ENCODE measurements at regions of chr20 and their contacts with region 1.

Region 1: DNA sequence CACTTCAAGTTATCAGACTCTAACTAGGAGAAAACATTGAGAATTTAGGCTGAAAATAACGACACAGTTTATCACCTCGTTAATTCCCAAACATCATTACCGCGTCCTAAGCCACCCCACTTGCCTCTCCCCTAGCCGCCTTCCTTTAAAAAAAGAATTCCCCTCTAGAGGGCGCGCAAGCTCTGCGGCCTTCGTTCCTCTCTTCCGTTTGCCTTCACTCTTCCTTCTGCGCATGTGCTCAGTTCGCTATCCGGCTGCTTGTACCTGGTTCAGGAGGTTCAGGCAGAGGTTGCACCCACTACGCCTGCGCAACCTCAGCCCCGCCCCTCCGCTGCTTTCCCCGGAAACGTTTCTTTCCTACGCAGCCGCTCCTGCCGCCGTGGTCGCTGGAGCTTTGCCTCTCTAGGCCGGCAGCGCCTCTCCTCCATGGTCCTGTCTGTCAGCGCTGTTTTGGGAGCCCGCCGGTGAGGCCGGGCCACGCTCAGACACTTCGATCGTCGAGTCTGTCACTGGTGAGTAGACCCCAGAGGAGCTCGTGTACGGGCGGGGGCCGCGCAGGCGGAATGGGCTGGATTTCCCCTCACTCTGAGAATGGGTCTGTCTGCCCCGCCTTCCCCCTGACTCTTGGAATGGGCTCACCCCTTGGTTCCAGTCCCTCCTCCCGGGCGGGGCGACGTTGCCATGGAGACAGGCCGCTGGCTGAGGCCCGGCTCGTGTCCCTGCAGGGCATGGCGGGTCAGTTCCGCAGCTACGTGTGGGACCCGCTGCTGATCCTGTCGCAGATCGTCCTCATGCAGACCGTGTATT is at the start of gene SYS1:
- DNase-seq: peak; percentile 94
- ATAC-seq: peak; percentile 84
- H3K4me3 Mint-ChIP-seq: peak within 1 kb of the TSS; percentile 100
- H3K27ac Mint-ChIP-seq: peak within 1 kb of the TSS; percentile 99
- H3K4me1 Mint-ChIP-seq: peaks cover 53% of the 10 kb centered on the region
- H3K27me3 Mint-ChIP-seq: no peaks in the 10 kb centered on the region
- CTCF ChIP-seq: peak; percentile 69
- total RNA-seq, gene SYS1: 31.7 and 35.2 TPM in 2 replicates

Region 2: DNA sequence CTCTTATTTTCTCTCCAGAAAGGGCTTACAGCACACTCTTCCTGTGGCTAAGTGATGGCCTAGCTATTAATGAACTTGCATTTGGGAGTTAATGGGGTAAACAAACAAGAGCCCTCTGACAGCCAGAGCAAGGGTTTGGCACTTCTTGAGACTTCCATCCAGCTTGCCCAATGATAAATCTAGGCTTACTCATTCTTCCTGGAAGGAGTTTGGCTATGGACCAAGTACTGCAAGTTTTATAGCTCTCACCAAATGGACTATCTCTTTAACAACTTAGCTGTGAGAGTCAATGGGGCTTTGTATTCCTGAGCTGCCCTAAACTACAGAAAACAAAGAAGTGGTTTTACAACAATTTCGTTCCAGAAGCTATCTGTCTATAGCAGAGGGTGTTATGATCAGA is 205.0 kb before region 1 on chr20:
- CTCF ChIA-PET with region 1: no interaction called
- POLR2A ChIA-PET with region 1: no interaction called
- intact Hi-C with region 1: no loop called
- DNase-seq: no peak
- ATAC-seq: no peak
- H3K4me3 Mint-ChIP-seq: no peak overlapping the region
- H3K27ac Mint-ChIP-seq: no peak overlapping the region
- H3K4me1 Mint-ChIP-seq: peaks cover 15% of the 10 kb centered on the region
- H3K27me3 Mint-ChIP-seq: peaks cover 24% of the 10 kb centered on the region
- CTCF ChIP-seq: no peak

Region 3: GRCh38 chr20:45229264-45230056 is 133.5 kb before region 1 on chr20:
- CTCF ChIA-PET with region 1: no interaction called
- POLR2A ChIA-PET with region 1: no interaction called
- intact Hi-C with region 1: no loop called
- DNase-seq: no peak
- ATAC-seq: no peak
- H3K4me3 Mint-ChIP-seq: no peak overlapping the region
- H3K27ac Mint-ChIP-seq: no peak overlapping the region
- H3K4me1 Mint-ChIP-seq: no peaks in the 10 kb centered on the region
- H3K27me3 Mint-ChIP-seq: peaks cover 11% of the 10 kb centered on the region
- CTCF ChIP-seq: no peak

Region 4: GRCh38 chr20:45283548-45284057 is 79.4 kb before region 1 on chr20:
- CTCF ChIA-PET with region 1: no interaction called
- POLR2A ChIA-PET with region 1: no interaction called
- intact Hi-C with region 1: no loop called
- DNase-seq: no peak
- ATAC-seq: no peak
- H3K4me3 Mint-ChIP-seq: no peak overlapping the region
- H3K27ac Mint-ChIP-seq: no peak overlapping the region
- H3K4me1 Mint-ChIP-seq: no peaks in the 10 kb centered on the region
- H3K27me3 Mint-ChIP-seq: peaks cover 40% of the 10 kb centered on the region
- CTCF ChIP-seq: no peak

Region 5: DNA sequence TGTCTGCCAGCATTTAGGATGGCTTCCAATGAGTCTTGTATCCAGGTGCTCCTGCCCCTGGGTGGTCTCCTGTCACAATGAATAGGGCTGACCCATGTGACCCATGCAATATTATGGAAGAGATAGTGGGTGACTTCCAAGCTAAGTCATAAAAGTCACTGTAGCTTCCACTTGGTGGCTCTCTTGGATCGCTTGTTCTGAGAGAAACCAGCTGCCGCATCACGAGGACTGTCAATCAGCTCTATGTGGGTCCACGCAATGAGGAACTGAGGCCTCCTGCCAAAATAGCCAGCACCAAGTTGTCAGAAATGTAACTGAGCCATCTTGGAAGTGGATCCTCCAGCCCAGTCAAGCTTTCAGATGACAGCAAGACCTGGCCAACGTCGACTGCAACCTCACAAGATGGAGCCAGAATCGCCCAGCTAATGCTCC is 40.0 kb before region 1 on chr20:
- CTCF ChIA-PET with region 1: interaction called, 8 read pairs
- POLR2A ChIA-PET with region 1: interaction called, 19 read pairs
- intact Hi-C with region 1: loop called (anchors 1 kb)
- DNase-seq: no peak
- ATAC-seq: peak; percentile 19
- H3K4me3 Mint-ChIP-seq: no peak overlapping the region
- H3K27ac Mint-ChIP-seq: no peak overlapping the region
- H3K4me1 Mint-ChIP-seq: peaks cover 37% of the 10 kb centered on the region
- H3K27me3 Mint-ChIP-seq: no peaks in the 10 kb centered on the region
- CTCF ChIP-seq: no peak

Region 6: GRCh38 chr20:45392733-45393132 is 29.7 kb after region 1 on chr20:
- CTCF ChIA-PET with region 1: no interaction called
- POLR2A ChIA-PET with region 1: no interaction called
- intact Hi-C with region 1: no loop called
- DNase-seq: no peak
- ATAC-seq: no peak
- H3K4me3 Mint-ChIP-seq: no peak overlapping the region
- H3K27ac Mint-ChIP-seq: no peak overlapping the region
- H3K4me1 Mint-ChIP-seq: no peaks in the 10 kb centered on the region
- H3K27me3 Mint-ChIP-seq: no peaks in the 10 kb centered on the region
- CTCF ChIP-seq: no peak

Region 7: GRCh38 chr20:45415774-45416637 is 53.0 kb after region 1 on chr20 and contains the start of gene PIGT:
- CTCF ChIA-PET with region 1: interaction called, 12 read pairs
- POLR2A ChIA-PET with region 1: interaction called, 41 read pairs
- intact Hi-C with region 1: loop called (anchors 1 kb)
- DNase-seq: peak; percentile 75
- ATAC-seq: peak; percentile 86
- H3K4me3 Mint-ChIP-seq: peak within 1 kb of the TSS; percentile 96
- H3K27ac Mint-ChIP-seq: peak within 1 kb of the TSS; percentile 98
- H3K4me1 Mint-ChIP-seq: peaks cover 58% of the 10 kb centered on the region
- H3K27me3 Mint-ChIP-seq: no peaks in the 10 kb centered on the region
- CTCF ChIP-seq: no peak
- total RNA-seq, gene PIGT: 65.8 and 74.5 TPM in 2 replicates

Region 8: DNA sequence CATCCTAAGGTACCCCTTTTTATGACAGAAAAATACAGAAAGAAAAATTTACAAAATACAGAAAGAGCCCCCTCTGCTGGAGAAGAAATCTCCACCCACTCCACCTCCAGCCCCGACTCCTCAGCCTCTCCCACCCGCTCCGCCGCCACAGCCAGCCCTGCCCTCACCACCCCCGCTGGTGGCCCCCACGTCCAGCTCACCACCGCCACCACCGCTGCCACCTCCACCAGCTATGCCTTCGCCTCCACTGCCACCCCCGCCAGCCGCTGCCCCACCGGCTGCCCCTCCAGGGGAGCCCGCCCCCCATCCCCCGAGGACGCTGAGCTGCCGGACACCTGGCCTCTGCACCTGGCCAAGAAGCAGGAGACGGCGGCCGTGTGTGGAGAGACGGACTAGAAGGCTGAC is 124.2 kb after region 1 on chr20:
- CTCF ChIA-PET with region 1: interaction called, 3 read pairs
- POLR2A ChIA-PET with region 1: no interaction called
- intact Hi-C with region 1: loop called (anchors 1 kb)
- DNase-seq: no peak
- ATAC-seq: no peak
- H3K4me3 Mint-ChIP-seq: no peak overlapping the region
- H3K27ac Mint-ChIP-seq: no peak overlapping the region
- H3K4me1 Mint-ChIP-seq: no peaks in the 10 kb centered on the region
- H3K27me3 Mint-ChIP-seq: peaks cover 26% of the 10 kb centered on the region
- CTCF ChIP-seq: no peak

Region 9: GRCh38 chr20:46406199-46406985 is 1043.4 kb after region 1 on chr20 and contains the start of gene ELMO2:
- CTCF ChIA-PET with region 1: no interaction called
- POLR2A ChIA-PET with region 1: no interaction called
- intact Hi-C with region 1: loop called (anchors 1 kb)
- DNase-seq: peak; percentile 90
- ATAC-seq: peak; percentile 90
- H3K4me3 Mint-ChIP-seq: peak within 1 kb of the TSS; percentile 94
- H3K27ac Mint-ChIP-seq: peak within 1 kb of the TSS; percentile 88
- H3K4me1 Mint-ChIP-seq: peaks cover 47% of the 10 kb centered on the region
- H3K27me3 Mint-ChIP-seq: no peaks in the 10 kb centered on the region
- CTCF ChIP-seq: no peak
- total RNA-seq, gene ELMO2: 39.0 and 45.6 TPM in 2 replicates

Measured in activated B cell treated with CpG ODN at 0.5 μM for 24 hours (primary cell).